CD4-positive, alpha-beta memory T cell (primary cell): ENCODE measurements at regions of chr11 and their contacts with region 1.

Region 1: DNA sequence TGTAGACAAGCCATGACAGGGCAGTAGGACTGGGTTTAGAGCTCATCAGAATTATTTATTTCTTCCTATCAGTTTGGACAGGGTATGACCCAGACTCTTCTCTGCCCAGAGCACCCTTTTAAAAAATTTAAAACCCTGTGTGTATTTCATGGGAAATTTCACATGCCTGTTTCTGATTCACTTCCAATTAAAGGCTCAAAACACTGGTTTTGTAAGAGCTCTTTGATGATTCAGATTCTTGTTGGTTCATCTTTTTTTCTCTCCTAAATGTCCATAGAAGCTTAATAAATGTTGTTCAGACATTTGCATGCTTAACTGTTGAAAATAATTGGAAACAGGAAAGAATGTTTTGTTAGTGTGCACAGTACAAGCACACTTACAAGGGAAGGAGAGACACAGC is 13.8 kb downstream of the FLI1 start:
- DNase-seq: no peak
- H3K4me3 ChIP-seq: no peak overlapping the region
- H3K4me3 Mint-ChIP-seq: peak overlapping the region in 5 of 8 donors; percentile 17 to 75 (median 58)
- H3K27ac ChIP-seq: no peak overlapping the region
- H3K27ac Mint-ChIP-seq: peak overlapping the region; percentile 20 to 81 (median 69)
- H3K4me1 ChIP-seq: peaks cover 100% of the 10 kb centered on the region
- H3K4me1 Mint-ChIP-seq: peaks cover 78 to 99% (median 94%) of the 10 kb centered on the region in 4 donors
- H3K27me3 ChIP-seq: no peaks in the 10 kb centered on the region
- H3K27me3 Mint-ChIP-seq: no peaks in the 10 kb centered on the region

Region 2: DNA sequence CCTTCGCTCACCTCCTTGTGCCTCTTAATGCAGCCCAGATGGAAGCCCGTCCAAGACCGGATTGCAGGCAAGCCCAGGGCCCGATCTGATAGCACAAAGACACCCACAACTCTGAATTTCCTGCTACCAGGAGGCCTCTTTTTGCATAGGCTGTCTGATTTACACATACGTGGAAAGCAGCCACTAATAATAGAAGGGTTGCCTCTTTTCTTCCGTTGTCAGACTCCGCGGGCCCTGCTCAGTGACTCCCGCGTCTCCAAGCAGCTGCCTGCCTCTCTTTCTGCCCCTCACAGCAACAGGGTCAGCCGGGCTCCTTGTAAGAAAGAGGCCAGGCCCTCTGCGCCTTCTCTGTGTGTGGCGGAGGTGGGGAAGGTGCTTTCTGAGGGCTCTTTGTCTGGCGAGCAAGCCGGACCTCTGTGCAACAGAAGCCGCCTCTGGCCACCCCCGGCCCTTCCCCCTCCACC is 12.9 kb after region 1 on chr11:
- CTCF ChIA-PET with region 1: interaction called, 20 read pairs
- POLR2A ChIA-PET with region 1: interaction called, 373 read pairs
- intact Hi-C with region 1: loop called (anchors 1 kb)
- DNase-seq: peak; percentile 49 to 66 (median 52)
- H3K4me3 ChIP-seq: peak overlapping the region in 1 of 2 donors; percentile 11
- H3K4me3 Mint-ChIP-seq: peak overlapping the region; percentile 80 to 94 (median 84)
- H3K27ac ChIP-seq: peak overlapping the region; percentile 47
- H3K27ac Mint-ChIP-seq: peak overlapping the region; percentile 91 to 98 (median 94)
- H3K4me1 ChIP-seq: peaks cover 100% of the 10 kb centered on the region
- H3K4me1 Mint-ChIP-seq: peaks cover 89 to 100% (median 97%) of the 10 kb centered on the region in 4 donors
- H3K27me3 ChIP-seq: no peaks in the 10 kb centered on the region
- H3K27me3 Mint-ChIP-seq: peaks cover 0 to 2% of the 10 kb centered on the region in 2 donors